ENCODE measurements at regions of chr3 and their contacts with region 1.

Region 1: GRCh38 chr3:183697610-183698317 is at the start of gene YEATS2:
- DNase-seq: peak; percentile 58
- H3K4me3 ChIP-seq: peak within 1 kb of the TSS; percentile 73 to 91 (median 89)
- H3K27ac ChIP-seq: peak within 1 kb of the TSS; percentile 84
- H3K4me1 ChIP-seq: peaks cover 10% of the 10 kb centered on the region
- H3K27me3 ChIP-seq: no peaks in the 10 kb centered on the region
- CTCF ChIP-seq: no peak
- total RNA-seq, gene YEATS2: 33.5 to 45.0 TPM

Region 2: GRCh38 chr3:183635431-183636220 is 62.1 kb before region 1 on chr3 and contains the start of gene KLHL24:
- CTCF ChIA-PET with region 1: no interaction called
- dilution Hi-C with region 1: loop called (anchors 5 kb)
- in situ Hi-C with region 1: no loop called
- intact Hi-C with region 1: loop called (anchors 1 kb)
- DNase-seq: peak; percentile 88
- H3K4me3 ChIP-seq: peak within 1 kb of the TSS; percentile 79 to 98 (median 94)
- H3K27ac ChIP-seq: peak within 1 kb of the TSS; percentile 62
- H3K4me1 ChIP-seq: peaks cover 4% of the 10 kb centered on the region
- H3K27me3 ChIP-seq: no peaks in the 10 kb centered on the region
- CTCF ChIP-seq: no peak
- total RNA-seq, gene KLHL24: 10.2 to 100 TPM

Region 3: DNA sequence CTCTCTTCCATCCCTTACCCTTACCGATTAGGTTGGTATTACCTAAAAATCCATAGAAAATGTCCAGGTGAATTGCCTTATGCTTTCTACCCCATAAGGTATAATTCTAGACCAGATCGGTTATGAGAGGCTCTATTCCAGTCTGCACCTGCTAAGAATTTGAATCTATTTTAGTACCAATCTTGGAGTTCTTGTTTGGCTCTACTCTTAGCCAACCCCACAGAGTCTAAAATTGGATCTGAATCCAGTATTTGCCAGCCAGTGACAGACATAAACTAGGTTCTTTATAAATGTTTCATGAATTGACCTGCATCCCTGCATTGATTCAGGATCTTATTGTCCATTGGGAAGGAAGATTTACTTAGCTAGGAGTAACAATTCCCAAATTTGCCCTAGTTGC is 55.9 kb before region 1 on chr3:
- CTCF ChIA-PET with region 1: no interaction called
- dilution Hi-C with region 1: loop called (anchors 5 kb)
- in situ Hi-C with region 1: no loop called
- intact Hi-C with region 1: no loop called
- DNase-seq: no peak
- H3K4me3 ChIP-seq: no peak overlapping the region
- H3K27ac ChIP-seq: no peak overlapping the region
- H3K4me1 ChIP-seq: peaks cover 4% of the 10 kb centered on the region
- H3K27me3 ChIP-seq: no peaks in the 10 kb centered on the region
- CTCF ChIP-seq: no peak

Region 4: GRCh38 chr3:183743231-183743630 is 45.5 kb after region 1 on chr3:
- CTCF ChIA-PET with region 1: no interaction called
- dilution Hi-C with region 1: loop called (anchors 5 kb)
- in situ Hi-C with region 1: no loop called
- intact Hi-C with region 1: no loop called
- DNase-seq: no peak
- H3K4me3 ChIP-seq: no peak overlapping the region
- H3K27ac ChIP-seq: no peak overlapping the region
- H3K4me1 ChIP-seq: no peaks in the 10 kb centered on the region
- H3K27me3 ChIP-seq: no peaks in the 10 kb centered on the region
- CTCF ChIP-seq: no peak

Region 5: GRCh38 chr3:183774631-183775030 is 76.9 kb after region 1 on chr3:
- CTCF ChIA-PET with region 1: no interaction called
- dilution Hi-C with region 1: loop called (anchors 5 kb)
- in situ Hi-C with region 1: no loop called
- intact Hi-C with region 1: no loop called
- DNase-seq: no peak
- H3K4me3 ChIP-seq: no peak overlapping the region
- H3K27ac ChIP-seq: no peak overlapping the region
- H3K4me1 ChIP-seq: no peaks in the 10 kb centered on the region
- H3K27me3 ChIP-seq: no peaks in the 10 kb centered on the region
- CTCF ChIP-seq: no peak

Region 6: DNA sequence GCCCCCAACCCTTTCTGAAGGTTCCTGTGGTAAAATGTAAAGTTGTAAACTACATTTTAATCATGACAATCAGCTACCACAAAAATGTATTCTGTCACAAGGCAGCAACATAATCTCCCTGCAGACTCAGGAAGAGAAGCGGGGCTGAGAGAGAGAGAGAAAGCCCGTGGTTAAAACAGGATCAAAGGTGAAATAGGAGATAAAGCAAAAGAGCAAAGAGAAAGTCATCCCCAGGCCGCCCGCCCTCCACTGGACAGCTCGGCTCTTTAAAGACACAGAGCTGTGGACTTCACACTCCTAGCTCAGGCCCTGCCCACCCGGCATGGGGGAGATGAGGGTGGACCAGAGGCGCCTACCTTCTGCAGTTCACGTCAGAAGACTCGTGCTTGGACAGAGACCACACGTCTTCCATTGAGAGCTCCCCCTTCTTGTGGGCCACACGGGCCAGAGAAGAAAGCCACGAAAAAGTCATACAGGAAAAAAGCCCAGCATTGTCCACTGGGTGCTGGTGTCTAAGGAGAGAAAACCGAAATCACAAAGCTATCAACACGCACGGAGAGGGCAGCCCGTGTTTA is 290.5 kb after region 1 on chr3:
- CTCF ChIA-PET with region 1: no interaction called
- dilution Hi-C with region 1: no loop called
- in situ Hi-C with region 1: no loop called
- intact Hi-C with region 1: no loop called
- DNase-seq: no peak
- H3K4me3 ChIP-seq: no peak overlapping the region
- H3K27ac ChIP-seq: no peak overlapping the region
- H3K4me1 ChIP-seq: no peaks in the 10 kb centered on the region
- H3K27me3 ChIP-seq: no peaks in the 10 kb centered on the region
- CTCF ChIP-seq: no peak

Measured in mammary epithelial cell (primary cell).